GM10248 (cell line): ENCODE measurements at regions of chr5 and their contacts with region 1.

Region 1: GRCh38 chr5:42057254-42057690 is 132.2 kb downstream of the FBXO4 start:
- DNase-seq: peak; percentile 54
- CTCF ChIP-seq: peak; percentile 80

Region 2: DNA sequence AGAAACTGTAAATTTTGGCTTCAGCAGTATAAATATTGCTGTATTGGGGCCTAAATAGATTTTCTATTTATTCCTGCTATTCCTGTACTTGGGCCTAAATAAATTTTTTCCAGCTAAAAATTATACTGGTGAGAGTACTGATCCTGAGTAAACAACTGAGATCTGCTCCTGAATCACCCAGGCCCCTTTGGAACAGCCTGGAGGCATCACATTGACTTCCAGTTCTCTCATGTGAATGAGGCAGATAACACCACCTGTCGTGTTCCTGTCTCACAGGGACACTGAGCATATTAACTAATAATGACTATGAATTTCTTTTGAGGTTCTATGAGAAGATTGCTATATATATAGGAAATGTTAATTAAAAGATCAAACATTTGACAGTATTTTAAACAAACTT is 427.4 kb before region 1 on chr5:
- CTCF ChIA-PET with region 1: no interaction called
- POLR2A ChIA-PET with region 1: no interaction called
- DNase-seq: no peak
- CTCF ChIP-seq: no peak

Region 3: GRCh38 chr5:41695920-41696582 is 361.2 kb before region 1 on chr5:
- CTCF ChIA-PET with region 1: interaction called, 16 read pairs
- POLR2A ChIA-PET with region 1: no interaction called
- DNase-seq: no peak
- CTCF ChIP-seq: peak; percentile 37

Region 4: GRCh38 chr5:41851116-41851515 is 206.2 kb before region 1 on chr5:
- CTCF ChIA-PET with region 1: interaction called, 269 read pairs
- POLR2A ChIA-PET with region 1: interaction called, 4 read pairs
- DNase-seq: no peak
- CTCF ChIP-seq: no peak

Region 5: DNA sequence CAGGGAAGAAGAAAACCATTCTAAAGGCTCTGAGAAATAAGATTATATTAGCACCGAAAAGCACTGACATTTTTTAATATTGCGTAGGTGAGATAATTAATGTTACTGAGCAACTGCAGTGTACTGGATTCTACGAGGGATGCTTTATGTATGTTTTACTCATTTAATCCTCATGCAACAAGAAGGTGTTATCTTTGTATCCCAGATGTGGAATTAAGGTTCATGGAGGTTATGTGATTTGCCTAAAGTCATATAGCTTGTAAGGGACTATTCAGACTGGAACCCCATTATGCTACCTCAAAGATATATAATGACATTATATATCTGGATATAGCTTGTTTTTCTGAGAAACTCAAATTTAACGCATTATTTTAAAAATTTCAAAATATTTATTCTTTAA is 129.7 kb before region 1 on chr5:
- CTCF ChIA-PET with region 1: interaction called, 12 read pairs
- POLR2A ChIA-PET with region 1: no interaction called
- DNase-seq: no peak
- CTCF ChIP-seq: no peak

Region 6: GRCh38 chr5:42013561-42013960 is 43.7 kb before region 1 on chr5:
- CTCF ChIA-PET with region 1: interaction called, 11 read pairs
- POLR2A ChIA-PET with region 1: no interaction called
- DNase-seq: no peak
- CTCF ChIP-seq: no peak

Region 7: GRCh38 chr5:42035526-42035925 is 21.7 kb before region 1 on chr5:
- CTCF ChIA-PET with region 1: interaction called, 11 read pairs
- POLR2A ChIA-PET with region 1: no interaction called
- DNase-seq: no peak
- CTCF ChIP-seq: no peak

Region 8: DNA sequence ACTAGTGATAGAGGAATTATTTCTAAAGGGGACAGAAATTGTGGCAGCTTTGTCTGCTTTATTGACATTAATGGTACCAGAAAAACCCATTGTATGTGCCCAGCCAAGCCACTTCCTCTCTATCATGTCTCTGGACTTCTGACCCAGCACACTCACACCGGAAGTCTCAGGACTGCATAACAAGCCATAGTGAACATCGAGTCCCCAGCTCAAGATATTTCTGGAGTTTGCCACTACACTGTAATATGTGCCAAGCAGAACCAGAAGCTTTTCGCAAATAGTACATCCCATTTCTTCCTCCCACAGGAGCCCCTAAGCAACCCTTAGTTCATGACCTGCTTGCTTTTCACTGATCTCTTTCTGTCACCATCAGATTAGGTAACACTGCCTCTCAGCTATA is 178.6 kb after region 1 on chr5:
- CTCF ChIA-PET with region 1: no interaction called
- POLR2A ChIA-PET with region 1: no interaction called
- DNase-seq: no peak
- CTCF ChIP-seq: no peak